Transverse colon (tissue), 4 donors: ENCODE measurements at regions of chr2 and their contacts with region 1.

Region 1: DNA sequence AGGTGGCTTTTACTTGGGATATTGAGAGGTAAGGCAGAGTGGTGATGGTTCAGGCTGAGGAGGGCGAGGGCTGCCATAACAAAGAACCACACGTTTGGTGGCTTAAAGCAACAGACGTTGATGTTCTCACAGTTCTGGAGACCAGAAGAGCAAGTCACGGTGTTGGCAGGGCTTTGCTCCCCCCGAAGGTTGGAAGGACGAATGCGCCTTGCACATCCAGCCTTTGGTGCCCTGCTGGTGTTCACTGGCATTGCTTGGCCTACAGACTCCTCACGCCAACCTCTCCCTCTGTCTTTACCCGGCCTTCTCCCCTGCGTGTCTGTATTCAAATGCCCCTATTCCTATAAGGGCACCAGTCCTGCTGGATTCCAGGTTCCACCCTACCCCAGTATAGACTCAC is 125.4 kb downstream of the TPO start:
- DNase-seq: no peak
- H3K4me3 ChIP-seq: no peak overlapping the region
- H3K27ac ChIP-seq: no peak overlapping the region
- H3K4me1 ChIP-seq: no peaks in the 10 kb centered on the region
- H3K27me3 ChIP-seq: no peaks in the 10 kb centered on the region
- CTCF ChIP-seq: peak in 3 of 5 experiments; percentile 8 to 16 (median 11)
- EP300 ChIP-seq: no peak
- POLR2A ChIP-seq: no peak

Region 2: DNA sequence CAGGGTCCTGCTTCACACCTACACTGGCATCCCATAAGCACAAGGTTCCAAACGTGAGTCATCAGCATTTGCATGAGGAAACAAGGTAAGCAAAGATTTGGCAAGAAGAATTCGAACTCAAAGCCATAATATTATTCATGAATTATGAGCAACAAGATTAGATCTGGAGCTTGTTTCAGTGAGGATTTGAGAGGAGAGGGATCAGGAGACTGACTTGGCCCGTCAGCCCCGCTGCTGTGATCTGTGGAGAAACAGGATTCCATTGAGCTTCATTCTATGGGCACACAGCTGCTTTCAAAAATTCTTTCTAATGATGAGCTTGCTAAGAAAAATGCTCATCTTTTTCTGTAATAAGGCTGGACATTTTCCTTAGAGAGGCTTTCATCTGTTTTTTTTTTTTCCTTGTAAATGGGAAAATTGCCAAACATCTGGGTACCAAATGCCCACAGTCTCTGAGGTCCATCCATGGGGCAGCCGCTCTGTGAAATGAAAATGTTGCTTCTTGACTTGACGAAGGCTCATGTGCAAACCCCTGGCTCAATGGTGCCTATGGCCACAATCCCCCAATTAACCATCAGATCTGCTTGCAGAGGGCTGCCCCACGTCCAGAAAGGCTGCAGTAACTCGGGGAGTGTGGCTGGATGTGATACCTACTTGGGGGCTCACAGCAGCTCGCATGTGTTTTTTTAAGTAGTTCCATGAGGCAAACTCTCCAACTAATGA is 1040.7 kb before region 1 on chr2:
- in situ Hi-C with region 1: no loop called
- intact Hi-C with region 1: loop called (anchors 5 kb)
- DNase-seq: no peak
- H3K4me3 ChIP-seq: no peak overlapping the region
- H3K27ac ChIP-seq: no peak overlapping the region
- H3K4me1 ChIP-seq: no peaks in the 10 kb centered on the region
- H3K27me3 ChIP-seq: no peaks in the 10 kb centered on the region
- CTCF ChIP-seq: no peak
- EP300 ChIP-seq: no peak
- POLR2A ChIP-seq: no peak

Region 3: GRCh38 chr2:1246239-1246638 is 292.4 kb before region 1 on chr2:
- in situ Hi-C with region 1: no loop called
- intact Hi-C with region 1: no loop called
- DNase-seq: no peak
- H3K4me3 ChIP-seq: no peak overlapping the region
- H3K27ac ChIP-seq: no peak overlapping the region
- H3K4me1 ChIP-seq: no peaks in the 10 kb centered on the region
- H3K27me3 ChIP-seq: peaks cover 4% of the 10 kb centered on the region
- CTCF ChIP-seq: no peak
- EP300 ChIP-seq: no peak
- POLR2A ChIP-seq: no peak